ENCODE measurements at regions of chr20 and their contacts with region 1.

Region 1: DNA sequence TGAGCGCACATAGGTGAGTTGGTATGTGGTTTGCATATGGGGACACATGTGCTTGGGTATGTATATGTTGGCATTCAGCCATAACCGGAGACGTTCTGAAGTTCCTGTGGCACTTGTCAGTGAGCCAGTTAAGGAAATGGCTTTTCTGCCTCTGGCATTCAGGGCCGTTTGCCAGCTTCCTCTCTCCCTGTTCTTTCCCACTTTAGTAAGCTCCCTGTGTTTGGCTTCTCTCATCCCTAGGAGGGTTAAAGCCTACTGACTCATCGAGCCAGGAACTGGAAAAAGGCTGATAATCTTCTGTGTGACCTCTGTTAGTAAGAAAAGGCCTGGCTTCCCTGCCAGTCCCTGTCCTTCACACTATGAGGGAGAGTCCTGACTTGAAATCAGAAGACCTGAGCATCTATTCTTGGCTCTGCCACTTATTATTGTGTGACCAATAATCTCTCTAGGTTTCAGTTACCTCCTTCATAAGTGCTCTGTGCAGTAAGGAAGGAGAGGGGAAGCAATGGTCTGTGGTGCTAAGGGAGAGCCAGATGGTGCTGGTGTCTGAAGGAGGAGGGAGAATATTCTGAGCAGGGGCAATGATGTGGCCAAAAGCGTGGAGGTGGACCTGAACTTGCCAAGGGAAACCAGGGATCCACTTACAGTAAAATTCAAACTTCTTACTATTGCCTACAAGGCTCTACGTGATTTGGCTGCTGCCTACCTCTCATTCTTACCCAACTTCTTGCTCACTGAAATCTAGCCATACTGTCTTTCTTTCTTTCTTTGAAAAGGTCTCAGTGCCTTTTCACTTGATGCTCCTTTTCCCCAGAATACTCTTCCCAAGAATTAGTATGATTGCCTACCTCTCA is 31.4 kb downstream of the ACSS2 start:
- DNase-seq: peak; percentile 99
- H3K4me3 Mint-ChIP-seq: peak overlapping the region; percentile 26
- H3K27ac Mint-ChIP-seq: peak overlapping the region; percentile 55
- H3K4me1 Mint-ChIP-seq: peaks cover 24% of the 10 kb centered on the region
- H3K27me3 Mint-ChIP-seq: no peaks in the 10 kb centered on the region
- CTCF ChIP-seq: no peak

Region 2: GRCh38 chr20:34825530-34826362 is 82.1 kb before region 1 on chr20 and contains the start of gene NCOA6:
- CTCF ChIA-PET with region 1: no interaction called
- POLR2A ChIA-PET with region 1: no interaction called
- intact Hi-C with region 1: no loop called
- DNase-seq: peak; percentile 78
- H3K4me3 Mint-ChIP-seq: peak within 1 kb of the TSS; percentile 97
- H3K27ac Mint-ChIP-seq: peak within 1 kb of the TSS; percentile 88
- H3K4me1 Mint-ChIP-seq: peaks cover 24% of the 10 kb centered on the region
- H3K27me3 Mint-ChIP-seq: peaks cover 22% of the 10 kb centered on the region
- CTCF ChIP-seq: no peak
- total RNA-seq, gene NCOA6: 25.7 and 27.9 TPM in 2 replicates

Region 3: DNA sequence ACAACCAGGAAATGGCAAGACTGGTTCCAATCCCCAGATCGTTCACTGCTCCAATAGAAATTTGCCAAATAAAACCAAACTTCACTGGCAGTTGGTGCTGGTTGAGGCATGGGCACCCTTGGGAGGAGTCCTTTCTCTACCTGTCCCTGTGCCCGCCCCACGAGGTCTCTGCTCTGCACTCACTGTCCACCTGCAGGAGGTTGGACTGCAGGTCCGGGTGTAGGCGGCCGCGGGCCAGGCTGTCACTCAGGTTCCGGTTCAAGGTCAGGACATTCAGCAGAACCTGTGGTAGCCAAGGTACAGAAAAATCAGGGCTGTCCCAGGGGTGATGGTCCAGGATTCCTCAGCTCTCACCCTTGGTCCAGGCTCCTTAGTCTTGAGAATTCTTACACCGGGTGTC is 58.1 kb before region 1 on chr20:
- CTCF ChIA-PET with region 1: no interaction called
- POLR2A ChIA-PET with region 1: no interaction called
- intact Hi-C with region 1: no loop called
- DNase-seq: no peak
- H3K4me3 Mint-ChIP-seq: no peak overlapping the region
- H3K27ac Mint-ChIP-seq: no peak overlapping the region
- H3K4me1 Mint-ChIP-seq: no peaks in the 10 kb centered on the region
- H3K27me3 Mint-ChIP-seq: peaks cover 18% of the 10 kb centered on the region
- CTCF ChIP-seq: no peak

Region 4: DNA sequence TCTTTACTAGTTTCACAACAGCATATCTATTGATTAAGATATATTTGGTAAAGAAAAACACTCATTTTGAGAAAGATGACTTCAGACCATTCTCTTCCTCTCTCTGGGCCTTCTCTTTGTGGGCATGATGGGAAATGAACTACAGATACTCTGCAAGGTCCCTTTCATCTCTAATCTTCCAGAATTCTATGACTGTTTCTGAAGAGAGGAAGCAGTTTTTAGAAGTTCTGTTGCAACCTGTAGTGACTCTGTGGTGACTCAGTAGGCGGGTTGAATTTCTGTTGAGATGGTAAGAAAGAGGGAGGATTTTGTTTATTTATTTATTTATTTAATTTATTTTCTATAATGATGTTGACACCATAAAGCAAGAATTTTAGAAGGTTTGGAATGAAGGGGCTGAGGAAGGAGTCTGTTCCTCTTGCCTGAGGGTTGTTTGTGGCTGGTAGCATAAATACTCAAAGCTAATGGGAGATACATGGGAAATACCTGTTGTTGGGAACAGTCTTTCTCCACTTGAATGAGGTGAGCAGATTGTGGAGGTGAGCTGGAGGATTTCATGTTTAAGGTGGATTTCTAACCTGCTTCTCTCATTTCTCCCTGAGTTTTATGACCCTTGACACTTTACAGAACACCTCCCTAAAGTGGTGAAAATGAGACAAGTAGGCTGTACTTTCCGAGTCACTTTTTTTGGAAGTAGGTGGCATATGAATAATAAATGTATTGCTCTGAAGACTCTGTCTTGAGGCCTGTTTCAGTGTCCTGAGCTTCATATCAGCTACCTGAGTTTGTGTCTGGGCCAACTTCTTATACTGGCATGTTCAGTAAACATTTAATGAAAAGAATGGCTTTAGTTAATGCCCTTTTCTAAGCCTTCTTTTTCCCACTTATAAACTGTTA is 16.4 kb before region 1 on chr20:
- CTCF ChIA-PET with region 1: interaction called, 3 read pairs
- POLR2A ChIA-PET with region 1: interaction called, 13 read pairs
- intact Hi-C with region 1: no loop called
- DNase-seq: peak; percentile 79
- H3K4me3 Mint-ChIP-seq: no peak overlapping the region
- H3K27ac Mint-ChIP-seq: peak overlapping the region; percentile 69
- H3K4me1 Mint-ChIP-seq: peaks cover 44% of the 10 kb centered on the region
- H3K27me3 Mint-ChIP-seq: no peaks in the 10 kb centered on the region
- CTCF ChIP-seq: no peak

Region 5: DNA sequence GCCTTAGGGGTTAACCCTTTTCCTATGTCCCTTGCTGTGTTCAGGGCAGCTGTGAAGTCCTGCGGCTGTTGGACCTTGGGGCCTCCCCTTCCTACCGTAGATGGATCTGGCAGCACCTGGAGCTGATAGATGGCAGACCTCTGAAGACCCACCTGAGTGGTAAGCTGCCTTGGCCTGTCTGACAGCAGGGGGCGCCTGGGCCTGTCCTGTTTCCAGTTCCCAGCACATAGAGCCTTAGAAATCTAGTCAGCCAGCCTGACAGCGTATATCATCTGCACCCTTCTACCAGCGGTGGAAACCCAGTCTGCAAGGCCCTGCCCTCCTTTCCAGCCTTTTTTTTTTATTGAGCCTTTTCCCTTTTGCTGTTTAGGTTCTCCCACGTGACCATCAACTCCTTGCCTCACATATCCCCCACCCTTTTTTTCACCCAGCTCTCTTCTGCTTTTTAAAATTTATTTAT is 1087.2 kb after region 1 on chr20:
- CTCF ChIA-PET with region 1: no interaction called
- POLR2A ChIA-PET with region 1: no interaction called
- intact Hi-C with region 1: no loop called
- DNase-seq: peak; percentile 85
- H3K4me3 Mint-ChIP-seq: no peak overlapping the region
- H3K27ac Mint-ChIP-seq: no peak overlapping the region
- H3K4me1 Mint-ChIP-seq: peaks cover 7% of the 10 kb centered on the region
- H3K27me3 Mint-ChIP-seq: peaks cover under 1% of the 10 kb centered on the region
- CTCF ChIP-seq: peak; percentile 86